ENCODE measurements at regions of chrX and their contacts with region 1.

Region 1: DNA sequence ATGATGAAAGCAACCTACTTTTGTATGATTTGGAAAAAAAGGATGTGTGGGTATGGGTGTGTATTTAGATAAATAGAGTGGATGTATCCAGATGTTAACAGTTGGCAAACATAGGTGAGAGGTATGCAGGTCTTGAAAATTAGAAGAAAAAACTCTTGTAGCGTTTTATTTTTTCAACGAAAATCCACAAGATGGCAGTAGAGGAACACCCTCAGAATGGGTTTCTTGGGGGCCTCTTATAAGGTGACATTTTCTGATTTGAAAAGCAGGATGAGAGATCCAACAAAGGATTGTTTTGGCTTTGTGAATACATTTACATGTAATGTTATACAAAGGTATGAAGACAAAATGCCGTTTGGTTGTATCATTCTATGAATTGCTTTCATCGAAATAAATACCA is 68.3 kb downstream of the FMR1NB start:
- DNase-seq: peak in 3 of 14 experiments; percentile 31 to 48 (median 42)
- ATAC-seq: no peak
- H3K4me3 ChIP-seq: no peak overlapping the region
- H3K4me3 Mint-ChIP-seq: no peak overlapping the region
- H3K27ac ChIP-seq: no peak overlapping the region
- H3K27ac Mint-ChIP-seq: no peak overlapping the region
- H3K4me1 ChIP-seq: no peaks in the 10 kb centered on the region
- H3K4me1 Mint-ChIP-seq: no peaks in the 10 kb centered on the region
- H3K27me3 ChIP-seq: no peaks in the 10 kb centered on the region
- H3K27me3 Mint-ChIP-seq: peaks cover 4% of the 10 kb centered on the region
- CTCF ChIP-seq: peak; percentile 63

Region 2: GRCh38 chrX:148069759-148070503 is 20.5 kb after region 1 on chrX:
- CTCF ChIA-PET with region 1: no interaction called
- POLR2A ChIA-PET with region 1: no interaction called
- intact Hi-C with region 1: no loop called
- DNase-seq: peak in 2 of 14 experiments; percentile 2 to 8
- ATAC-seq: no peak
- H3K4me3 ChIP-seq: no peak overlapping the region
- H3K4me3 Mint-ChIP-seq: no peak overlapping the region
- H3K27ac ChIP-seq: no peak overlapping the region
- H3K27ac Mint-ChIP-seq: no peak overlapping the region
- H3K4me1 ChIP-seq: no peaks in the 10 kb centered on the region
- H3K4me1 Mint-ChIP-seq: no peaks in the 10 kb centered on the region
- H3K27me3 ChIP-seq: peaks cover 0 to 4% of the 10 kb centered on the region in 2 experiments
- H3K27me3 Mint-ChIP-seq: no peaks in the 10 kb centered on the region
- CTCF ChIP-seq: no peak

Region 3: DNA sequence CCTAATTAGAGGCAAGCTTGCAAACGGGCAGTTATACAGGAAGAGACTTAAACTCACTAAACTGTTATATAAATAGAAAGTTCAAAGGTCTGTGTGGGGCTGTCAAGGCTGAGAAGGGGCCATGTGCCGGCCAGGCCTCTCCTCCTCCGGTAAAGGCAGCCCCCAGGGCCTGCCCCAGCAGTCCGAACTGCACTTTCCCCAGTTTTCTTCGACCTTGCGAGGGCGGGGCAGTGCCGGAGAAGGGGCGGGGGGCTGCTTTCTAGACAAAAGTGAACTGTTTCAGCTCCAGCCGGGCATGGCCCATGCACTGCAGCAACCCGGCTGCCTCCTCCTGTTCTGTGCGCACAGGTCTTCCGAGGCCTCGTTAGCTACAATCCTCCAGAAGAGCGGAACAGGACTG is 455.1 kb after region 1 on chrX:
- CTCF ChIA-PET with region 1: no interaction called
- POLR2A ChIA-PET with region 1: no interaction called
- intact Hi-C with region 1: no loop called
- DNase-seq: no peak
- ATAC-seq: no peak
- H3K4me3 ChIP-seq: no peak overlapping the region
- H3K4me3 Mint-ChIP-seq: no peak overlapping the region
- H3K27ac ChIP-seq: no peak overlapping the region
- H3K27ac Mint-ChIP-seq: no peak overlapping the region
- H3K4me1 ChIP-seq: peaks cover 16% of the 10 kb centered on the region
- H3K4me1 Mint-ChIP-seq: peaks cover 6% of the 10 kb centered on the region
- H3K27me3 ChIP-seq: peaks cover 2 to 20% of the 10 kb centered on the region in 2 experiments
- H3K27me3 Mint-ChIP-seq: peaks cover 12% of the 10 kb centered on the region
- CTCF ChIP-seq: no peak

Region 4: DNA sequence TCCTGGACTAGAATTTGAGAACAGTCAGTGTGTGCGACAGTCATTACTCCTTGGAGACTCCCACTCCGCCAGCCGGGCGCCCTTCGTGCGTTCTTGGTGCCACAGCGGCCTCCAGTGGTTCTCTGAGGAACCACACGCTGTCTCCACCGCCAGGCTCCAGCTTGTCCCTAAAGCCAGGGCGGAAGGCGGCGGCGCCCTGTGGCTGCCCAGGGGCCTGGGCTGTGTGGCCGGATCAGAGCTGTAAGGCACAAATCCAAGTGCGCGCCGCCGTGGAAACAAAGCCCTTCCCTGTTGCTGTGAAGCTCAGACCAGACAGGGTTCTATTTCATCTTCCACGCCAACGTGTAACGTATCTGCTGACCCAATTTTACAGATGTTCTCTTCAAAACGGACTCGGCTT is 1421.5 kb after region 1 on chrX:
- CTCF ChIA-PET with region 1: no interaction called
- POLR2A ChIA-PET with region 1: no interaction called
- intact Hi-C with region 1: loop called in 1 of 2 experiments (anchors 2 kb)
- DNase-seq: peak; percentile 24 to 75 (median 48)
- ATAC-seq: peak; percentile 86
- H3K4me3 ChIP-seq: no peak overlapping the region
- H3K4me3 Mint-ChIP-seq: no peak overlapping the region
- H3K27ac ChIP-seq: no peak overlapping the region
- H3K27ac Mint-ChIP-seq: no peak overlapping the region
- H3K4me1 ChIP-seq: no peaks in the 10 kb centered on the region
- H3K4me1 Mint-ChIP-seq: peaks cover 4% of the 10 kb centered on the region
- H3K27me3 ChIP-seq: no peaks in the 10 kb centered on the region
- H3K27me3 Mint-ChIP-seq: peaks cover 7% of the 10 kb centered on the region
- CTCF ChIP-seq: peak; percentile 70

Measured in CD4-positive, alpha-beta T cell (primary cell).